CD4-positive, alpha-beta memory T cell (primary cell): ENCODE measurements at regions of chr2 and their contacts with region 1.

Region 1: DNA sequence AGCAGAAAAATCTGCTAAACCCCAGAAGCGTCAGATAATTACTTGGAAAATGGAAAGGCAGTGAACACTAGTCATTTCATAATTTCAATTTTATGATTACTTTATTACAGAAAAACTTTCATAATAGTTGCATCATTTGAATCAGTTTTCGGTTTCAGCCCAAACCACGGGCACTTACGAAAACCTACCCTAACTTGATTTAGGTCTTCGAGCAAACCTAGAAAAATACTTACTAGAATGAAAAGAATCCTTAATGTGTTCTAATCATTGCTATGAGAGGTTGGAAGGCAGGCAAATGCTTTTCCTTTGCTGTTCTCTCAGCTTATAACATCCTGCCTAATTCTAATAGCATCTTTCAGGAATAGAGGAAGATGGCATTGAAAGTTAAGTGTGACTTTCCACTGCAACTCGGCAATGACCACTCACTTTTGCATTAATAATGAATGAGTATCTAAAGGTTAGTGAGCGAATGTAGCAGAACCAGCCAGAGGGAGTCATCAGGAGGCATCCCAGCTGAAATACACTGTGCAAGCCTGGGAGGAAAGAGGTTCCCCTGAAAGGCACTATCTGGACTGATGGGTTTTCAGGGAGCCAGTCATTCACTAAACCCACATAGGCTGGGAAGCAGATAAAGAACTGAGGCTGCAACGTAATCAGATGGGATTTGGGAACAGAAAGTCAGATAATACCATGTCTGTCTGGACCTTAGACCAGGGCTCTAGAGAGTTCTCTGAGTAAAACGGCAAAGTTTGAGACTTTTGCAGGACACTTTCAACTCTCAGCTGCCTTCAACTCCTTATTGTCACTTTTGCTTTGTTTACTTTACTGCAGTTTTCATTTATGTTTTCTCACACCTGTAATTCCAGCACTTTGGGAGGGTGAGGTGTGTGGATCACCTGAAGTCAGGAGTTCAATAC is 520.8 kb downstream of the RNF144A start:
- DNase-seq: no peak
- H3K4me3 ChIP-seq: no peak overlapping the region
- H3K4me3 Mint-ChIP-seq: peak overlapping the region in 7 of 8 donors; percentile 11 to 62 (median 21)
- H3K27ac ChIP-seq: no peak overlapping the region
- H3K27ac Mint-ChIP-seq: peak overlapping the region in 6 of 7 donors; percentile 23 to 79 (median 42)
- H3K4me1 ChIP-seq: peaks cover 30% of the 10 kb centered on the region
- H3K4me1 Mint-ChIP-seq: peaks cover 16 to 42% (median 31%) of the 10 kb centered on the region in 4 donors
- H3K27me3 ChIP-seq: no peaks in the 10 kb centered on the region
- H3K27me3 Mint-ChIP-seq: no peaks in the 10 kb centered on the region

Region 2: DNA sequence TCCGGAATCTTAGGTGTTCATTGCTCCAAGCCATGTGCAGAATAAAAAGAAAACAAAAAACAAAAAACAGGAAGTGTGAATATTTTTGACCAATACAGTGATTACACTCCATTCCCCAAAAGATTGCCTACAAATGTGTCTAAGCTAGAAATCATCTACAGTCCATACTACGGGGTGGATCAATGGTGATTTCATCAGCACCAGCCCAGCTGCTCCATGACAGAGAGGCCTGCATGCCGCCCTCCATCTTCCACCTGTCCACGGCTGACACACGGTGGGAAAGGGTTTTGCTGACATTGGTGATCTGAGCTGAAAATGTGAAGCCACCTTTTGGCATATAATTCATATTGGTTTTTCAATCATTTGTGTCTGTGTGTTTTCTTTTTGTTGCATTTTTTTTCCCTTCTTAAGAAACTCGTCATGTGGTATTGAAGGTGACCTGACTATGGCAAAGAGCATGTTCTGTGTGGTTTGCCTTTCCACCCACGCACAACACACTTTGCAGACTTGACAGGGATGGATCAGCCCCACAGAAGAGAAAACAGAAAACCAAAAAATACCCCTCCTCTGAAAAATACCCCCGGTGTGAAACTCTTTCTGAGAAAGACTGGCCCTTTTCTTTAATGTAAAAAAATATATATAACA is 12.3 kb after region 1 on chr2:
- CTCF ChIA-PET with region 1: interaction called, 4 read pairs
- POLR2A ChIA-PET with region 1: interaction called, 10 read pairs
- intact Hi-C with region 1: loop called (anchors 2 kb)
- DNase-seq: peak; percentile 54 to 72 (median 59)
- H3K4me3 ChIP-seq: no peak overlapping the region
- H3K4me3 Mint-ChIP-seq: peak overlapping the region in 7 of 8 donors; percentile 60 to 83 (median 67)
- H3K27ac ChIP-seq: no peak overlapping the region
- H3K27ac Mint-ChIP-seq: peak overlapping the region; percentile 85 to 95 (median 93)
- H3K4me1 ChIP-seq: peaks cover 60% of the 10 kb centered on the region
- H3K4me1 Mint-ChIP-seq: peaks cover 44 to 66% (median 57%) of the 10 kb centered on the region in 4 donors
- H3K27me3 ChIP-seq: no peaks in the 10 kb centered on the region
- H3K27me3 Mint-ChIP-seq: no peaks in the 10 kb centered on the region